ENCODE measurements at regions of chr1 and their contacts with region 1.

Region 1: GRCh38 chr1:116151739-116152576 is 40.8 kb downstream of the MAB21L3 start:
- DNase-seq: peak; percentile 72 to 81 (median 76)
- H3K4me3 ChIP-seq: peak overlapping the region; percentile 23 to 28
- H3K4me3 Mint-ChIP-seq: peak overlapping the region; percentile 46 to 87 (median 80)
- H3K27ac ChIP-seq: peak overlapping the region; percentile 17
- H3K27ac Mint-ChIP-seq: peak overlapping the region; percentile 81 to 93 (median 88)
- H3K4me1 ChIP-seq: peaks cover 17% of the 10 kb centered on the region
- H3K4me1 Mint-ChIP-seq: peaks cover 10 to 23% (median 15%) of the 10 kb centered on the region in 4 donors
- H3K27me3 ChIP-seq: no peaks in the 10 kb centered on the region
- H3K27me3 Mint-ChIP-seq: peaks cover 0 to 3% of the 10 kb centered on the region in 2 donors

Region 2: GRCh38 chr1:116168277-116169097 is 16.5 kb after region 1 on chr1:
- CTCF ChIA-PET with region 1: interaction called, 11 read pairs
- POLR2A ChIA-PET with region 1: interaction called, 3 read pairs
- intact Hi-C with region 1: loop called (anchors 1 kb)
- DNase-seq: peak; percentile 77 to 84 (median 83)
- H3K4me3 ChIP-seq: peak overlapping the region; percentile 13 to 71
- H3K4me3 Mint-ChIP-seq: peak overlapping the region; percentile 63 to 94 (median 88)
- H3K27ac ChIP-seq: peak overlapping the region; percentile 55
- H3K27ac Mint-ChIP-seq: peak overlapping the region; percentile 33 to 96 (median 90)
- H3K4me1 ChIP-seq: peaks cover 12% of the 10 kb centered on the region
- H3K4me1 Mint-ChIP-seq: peaks cover 12 to 22% (median 17%) of the 10 kb centered on the region in 4 donors
- H3K27me3 ChIP-seq: no peaks in the 10 kb centered on the region
- H3K27me3 Mint-ChIP-seq: peaks cover 0 to 1% of the 10 kb centered on the region in 2 donors

Region 3: DNA sequence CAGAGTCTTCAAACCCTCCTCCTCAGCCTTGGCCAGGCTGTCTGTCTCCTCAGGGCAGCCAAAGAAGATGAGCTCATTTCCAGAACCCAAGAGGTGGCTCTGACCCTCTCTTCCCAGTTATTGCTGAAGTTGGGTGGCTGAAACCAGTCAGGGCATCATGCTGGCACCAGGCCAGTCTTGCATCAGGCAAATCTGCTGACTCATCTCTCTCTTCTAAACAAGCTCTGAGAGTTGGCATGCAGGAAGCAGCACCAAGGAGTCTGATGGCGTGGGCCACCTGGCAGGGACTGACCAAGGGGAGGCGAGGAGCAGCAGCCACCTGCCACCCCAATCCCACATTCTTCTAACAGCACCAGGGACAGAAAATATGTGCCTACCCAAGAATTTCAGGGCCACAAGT is 116.2 kb after region 1 on chr1:
- CTCF ChIA-PET with region 1: no interaction called
- POLR2A ChIA-PET with region 1: no interaction called
- intact Hi-C with region 1: no loop called
- DNase-seq: no peak
- H3K4me3 ChIP-seq: no peak overlapping the region
- H3K4me3 Mint-ChIP-seq: no peak overlapping the region
- H3K27ac ChIP-seq: no peak overlapping the region
- H3K27ac Mint-ChIP-seq: peak overlapping the region in 1 of 7 donors; percentile 19
- H3K4me1 ChIP-seq: peaks cover 6% of the 10 kb centered on the region
- H3K4me1 Mint-ChIP-seq: peaks cover 0 to 13% (median 9%) of the 10 kb centered on the region in 4 donors
- H3K27me3 ChIP-seq: no peaks in the 10 kb centered on the region
- H3K27me3 Mint-ChIP-seq: no peaks in the 10 kb centered on the region

Region 4: DNA sequence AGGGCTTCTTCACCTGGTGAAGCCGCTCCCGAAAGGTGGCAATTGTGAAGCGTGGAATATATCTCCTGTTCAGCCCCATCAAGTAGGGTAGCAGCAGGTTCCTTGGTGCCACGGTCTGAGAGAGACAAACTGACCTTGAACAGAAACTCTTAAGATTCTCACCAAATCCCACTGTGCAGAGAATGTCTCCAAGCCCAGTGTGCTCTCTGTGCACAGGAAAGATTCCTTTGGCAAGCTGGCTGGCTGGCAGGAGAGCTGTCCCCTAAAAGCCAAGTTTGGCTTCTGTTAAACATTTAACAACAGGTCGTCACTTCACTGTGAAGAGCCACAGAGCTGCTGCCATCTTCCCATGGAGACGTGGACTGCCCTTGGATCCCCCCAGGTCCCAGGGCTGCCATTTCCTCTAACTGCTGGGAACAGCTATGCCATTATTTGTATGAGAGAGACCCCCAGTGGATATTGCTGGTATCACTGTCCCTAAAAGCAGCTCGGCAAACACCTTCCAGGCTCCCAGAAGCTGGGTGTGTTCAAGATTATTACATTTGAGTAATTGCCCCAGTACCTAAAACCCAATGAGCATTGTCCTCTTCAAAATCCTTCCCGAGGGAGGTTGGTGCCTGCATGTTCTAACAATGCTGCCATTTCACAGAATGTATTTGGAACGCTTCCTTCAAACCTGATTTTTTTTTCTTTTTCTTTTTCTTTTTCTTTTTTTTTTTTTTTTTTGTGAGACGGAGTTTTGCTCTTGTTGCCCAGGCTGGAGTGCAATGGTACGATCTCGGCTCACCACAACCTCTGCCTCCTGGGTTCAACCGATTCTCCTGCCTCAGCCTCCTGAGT is 347.1 kb after region 1 on chr1:
- CTCF ChIA-PET with region 1: interaction called, 16 read pairs
- POLR2A ChIA-PET with region 1: no interaction called
- intact Hi-C with region 1: loop called (anchors 1 kb)
- DNase-seq: peak; percentile 38 to 59 (median 54)
- H3K4me3 ChIP-seq: no peak overlapping the region
- H3K4me3 Mint-ChIP-seq: peak overlapping the region in 1 of 8 donors; percentile 27
- H3K27ac ChIP-seq: no peak overlapping the region
- H3K27ac Mint-ChIP-seq: peak overlapping the region in 6 of 7 donors; percentile 42 to 90 (median 74)
- H3K4me1 ChIP-seq: peaks cover 31% of the 10 kb centered on the region
- H3K4me1 Mint-ChIP-seq: peaks cover 26 to 60% (median 35%) of the 10 kb centered on the region in 4 donors
- H3K27me3 ChIP-seq: no peaks in the 10 kb centered on the region
- H3K27me3 Mint-ChIP-seq: no peaks in the 10 kb centered on the region

Measured in CD4-positive, alpha-beta memory T cell (primary cell).